ENCODE measurements at regions of chr3 and their contacts with region 1.

Region 1: DNA sequence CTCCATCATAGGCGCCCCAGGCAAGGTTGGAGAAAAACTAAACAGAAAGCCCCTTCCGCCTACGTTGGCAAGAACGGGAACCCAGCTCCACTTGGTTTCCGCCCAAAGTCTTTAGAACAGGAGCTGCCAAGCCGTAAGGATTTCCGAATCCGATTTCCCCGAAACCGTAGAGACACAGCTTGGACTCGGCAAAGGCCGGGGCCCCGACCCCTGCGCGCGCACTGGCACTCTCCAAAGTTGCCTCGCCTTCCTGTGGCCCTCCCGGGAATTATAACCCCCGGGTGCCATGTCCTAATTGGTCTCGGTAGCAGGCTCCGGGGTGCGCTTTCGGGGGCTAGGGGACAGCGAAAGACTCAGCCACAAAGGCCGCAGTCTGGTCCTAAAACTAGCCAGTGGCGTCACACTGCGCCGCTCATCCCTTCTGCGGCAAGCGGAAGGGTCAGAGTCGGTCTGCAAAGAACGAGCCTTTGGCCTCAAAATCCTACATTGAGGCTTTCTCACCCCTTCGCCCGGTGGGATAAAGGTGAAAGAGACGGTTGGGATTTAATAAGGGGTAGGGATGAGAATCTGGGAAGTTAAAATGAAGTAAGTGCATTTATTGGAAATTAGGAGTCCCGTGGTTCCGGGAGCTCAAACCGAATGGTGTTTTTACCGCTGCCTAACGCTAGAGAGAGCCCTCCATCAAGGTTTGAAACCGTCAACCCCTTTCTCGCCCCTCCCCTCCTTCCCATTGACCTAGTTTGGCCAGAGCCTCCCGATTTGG is 6.8 kb downstream of the BCL6 start:
- DNase-seq: peak; percentile 87 to 97
- H3K4me3 ChIP-seq: peak overlapping the region; percentile 57 to 83 (median 70)
- H3K27ac ChIP-seq: peak overlapping the region; percentile 76 to 100 (median 98)
- H3K4me1 ChIP-seq: peaks cover 27 to 67% (median 56%) of the 10 kb centered on the region in 4 donors
- H3K27me3 ChIP-seq: no peaks in the 10 kb centered on the region
- CTCF ChIP-seq: peak in 5 of 7 experiments; percentile 54 to 87 (median 71)
- EP300 ChIP-seq: no peak
- POLR2A ChIP-seq: no peak

Region 2: DNA sequence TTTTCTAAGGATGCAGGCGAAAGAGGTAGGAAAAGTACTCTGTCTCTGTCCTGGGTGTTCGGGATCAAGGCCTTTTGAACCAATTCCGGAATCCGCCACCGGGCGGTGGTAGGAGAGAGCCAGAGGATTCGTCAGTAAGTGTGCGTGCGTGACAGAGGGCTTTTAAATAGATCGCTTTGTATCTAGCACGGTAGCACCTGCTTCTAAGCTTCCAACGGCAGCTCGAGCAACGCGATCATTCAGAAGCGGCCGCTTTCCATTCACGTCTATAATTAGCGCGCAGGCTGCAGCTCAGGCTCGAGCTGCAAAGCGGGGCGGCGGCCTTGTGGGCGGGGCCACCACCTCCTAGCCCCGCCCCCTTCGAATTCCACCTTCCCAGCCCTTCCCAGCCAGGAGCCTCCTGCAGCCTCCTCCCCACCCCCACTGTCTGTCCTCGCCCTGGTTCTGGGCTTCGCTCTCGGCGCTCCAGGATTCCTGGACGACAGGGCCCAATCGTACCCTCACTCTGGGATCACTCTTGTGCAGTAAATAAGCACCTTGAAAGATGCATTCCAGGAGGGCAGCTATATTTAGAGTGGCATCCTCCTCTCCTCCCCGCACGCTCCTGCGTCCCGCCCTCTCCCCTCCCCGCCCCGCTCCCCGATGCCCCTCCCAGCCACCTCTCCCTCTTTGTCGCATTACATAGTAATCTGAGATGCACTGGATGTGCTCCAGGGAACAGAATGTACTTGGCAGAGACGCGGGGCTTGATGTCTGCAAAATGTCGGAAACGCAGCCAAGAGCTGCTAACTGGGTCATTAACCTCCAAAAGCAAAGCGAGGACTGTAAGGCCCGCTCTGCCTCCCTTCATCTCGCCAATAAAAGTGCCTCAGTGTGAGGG is 1209.1 kb after region 1 on chr3:
- intact Hi-C with region 1: loop called (anchors 10 kb)
- DNase-seq: peak; percentile 96 to 97
- H3K4me3 ChIP-seq: peak overlapping the region; percentile 38 to 45 (median 40)
- H3K27ac ChIP-seq: peak overlapping the region; percentile 85 to 98 (median 96)
- H3K4me1 ChIP-seq: peaks cover 43 to 70% (median 61%) of the 10 kb centered on the region in 4 donors
- H3K27me3 ChIP-seq: no peaks in the 10 kb centered on the region
- CTCF ChIP-seq: peak in 4 of 7 experiments; percentile 30 to 46 (median 35)
- EP300 ChIP-seq: peak; percentile 100
- POLR2A ChIP-seq: no peak

Region 3: DNA sequence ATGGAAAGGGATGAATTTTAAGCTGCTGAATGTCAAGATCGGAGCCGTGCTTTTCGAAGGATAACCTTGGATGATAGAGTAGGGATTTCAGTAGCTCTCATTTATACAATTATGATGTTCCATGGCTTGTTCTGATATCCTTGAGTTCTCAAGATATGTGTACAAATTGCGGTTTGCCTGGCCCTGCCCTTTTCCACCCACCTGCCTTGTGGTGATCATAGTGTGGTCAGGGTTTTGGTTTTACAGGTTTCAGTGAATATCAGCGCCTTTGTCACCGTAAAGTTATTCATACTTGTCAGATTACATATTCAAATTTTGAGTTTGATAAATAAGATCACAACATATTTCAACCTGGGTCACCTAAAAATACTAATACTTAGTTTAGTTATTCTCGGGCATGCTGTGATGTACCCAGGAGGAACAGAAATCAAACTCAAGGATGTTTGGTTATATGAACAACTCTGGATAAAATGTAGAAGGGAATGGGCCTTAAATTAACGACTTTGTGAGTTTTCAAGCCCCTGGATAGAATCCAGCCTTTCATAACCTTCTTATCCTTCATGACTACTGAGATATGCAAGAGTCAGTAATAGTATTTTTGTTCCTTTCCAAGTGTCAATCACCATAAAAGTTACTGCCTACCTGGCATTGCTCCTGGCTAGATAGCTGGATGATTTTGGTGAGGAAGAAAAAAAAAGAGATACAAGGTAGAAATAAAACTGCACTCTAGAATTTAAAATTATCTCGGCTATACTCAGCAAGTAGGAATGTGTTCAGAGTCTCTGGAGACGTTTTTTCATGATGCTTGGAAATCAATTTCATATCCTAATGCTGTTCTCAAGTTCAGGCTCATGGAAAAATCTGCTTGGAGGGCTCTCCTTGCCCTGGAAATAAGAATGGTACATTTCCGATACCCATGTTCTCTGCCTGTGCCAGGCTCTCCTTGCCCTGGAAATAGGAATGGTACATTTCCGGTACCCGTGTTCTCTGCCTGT is 1224.0 kb after region 1 on chr3:
- intact Hi-C with region 1: loop called (anchors 5 kb)
- DNase-seq: no peak
- H3K4me3 ChIP-seq: no peak overlapping the region
- H3K27ac ChIP-seq: no peak overlapping the region
- H3K4me1 ChIP-seq: no peaks in the 10 kb centered on the region
- H3K27me3 ChIP-seq: no peaks in the 10 kb centered on the region
- CTCF ChIP-seq: no peak
- EP300 ChIP-seq: no peak
- POLR2A ChIP-seq: no peak

Measured in stomach (tissue), 19 donors.